ENCODE measurements at regions of chrX and their contacts with region 1.

Region 1: DNA sequence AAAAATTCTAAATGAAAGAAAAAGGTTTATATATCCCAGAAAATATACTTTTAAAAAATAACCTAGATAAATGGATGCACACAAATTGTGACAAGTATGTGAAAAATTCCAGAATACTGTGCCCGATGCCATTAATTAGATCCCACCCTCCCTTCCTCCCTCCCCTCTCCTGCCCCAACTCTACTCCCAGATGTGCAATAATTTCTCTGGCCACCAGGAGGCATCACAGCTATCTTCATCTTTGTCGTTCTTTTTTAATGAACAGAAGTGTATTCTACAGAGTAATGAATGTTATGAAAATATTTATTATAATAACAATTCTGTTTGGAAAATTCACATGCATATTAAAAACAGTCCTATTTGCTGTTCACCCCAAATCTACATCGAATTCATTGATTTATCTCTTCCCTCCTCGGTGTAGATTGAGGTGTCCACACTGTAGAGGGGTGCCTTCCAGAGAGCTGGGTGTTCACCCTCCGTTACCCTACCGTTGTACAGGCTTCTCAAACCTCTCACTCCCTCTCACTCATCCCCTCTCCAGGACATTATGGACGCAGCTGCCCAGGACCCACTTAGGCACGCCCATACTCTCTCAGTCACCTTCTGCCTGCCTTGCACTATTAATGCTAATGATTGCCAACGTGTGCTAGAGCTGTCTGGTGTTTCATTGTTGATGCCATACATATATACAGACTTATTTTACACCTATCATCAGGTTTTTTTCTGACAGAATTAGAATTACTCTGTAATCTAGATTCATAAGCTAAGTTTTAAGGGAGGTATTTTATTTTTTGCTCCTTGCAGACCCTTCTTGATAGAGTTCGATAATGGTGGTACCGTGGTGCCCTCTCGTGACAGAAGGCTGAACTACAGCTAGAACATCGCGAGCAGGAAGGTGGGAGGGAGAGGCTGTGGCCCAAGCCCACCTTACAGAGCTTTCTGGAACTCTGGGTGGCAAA is 14.1 kb downstream of the RAB40AL start:
- DNase-seq: peak; percentile 72
- ATAC-seq: peak; percentile 75
- H3K4me3 Mint-ChIP-seq: peak overlapping the region; percentile 43
- H3K27ac Mint-ChIP-seq: no peak overlapping the region
- H3K4me1 Mint-ChIP-seq: no peaks in the 10 kb centered on the region
- H3K27me3 Mint-ChIP-seq: no peaks in the 10 kb centered on the region
- CTCF ChIP-seq: peak; percentile 68

Region 2: DNA sequence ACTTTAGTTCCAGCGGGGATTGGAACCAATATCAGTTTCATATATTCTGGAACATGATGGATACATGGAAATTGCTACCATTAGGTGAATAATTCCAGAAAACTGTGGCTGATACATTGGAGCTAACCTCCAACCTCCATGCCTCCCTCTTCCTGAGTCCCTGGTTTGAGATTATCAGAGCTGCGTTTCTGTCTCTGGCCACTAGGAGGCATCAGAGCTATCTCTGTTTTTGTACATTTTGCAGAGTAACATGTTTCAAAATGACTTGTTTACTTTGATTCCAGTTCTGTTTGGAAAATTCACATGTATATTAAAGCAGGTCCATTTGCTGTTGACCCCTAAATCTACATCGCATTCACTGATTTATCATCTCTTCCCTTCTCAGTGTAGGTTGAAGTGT is 16.6 kb before region 1 on chrX:
- CTCF ChIA-PET with region 1: interaction called, 24 read pairs
- POLR2A ChIA-PET with region 1: no interaction called
- intact Hi-C with region 1: no loop called
- DNase-seq: peak; percentile 41
- ATAC-seq: no peak
- H3K4me3 Mint-ChIP-seq: no peak overlapping the region
- H3K27ac Mint-ChIP-seq: no peak overlapping the region
- H3K4me1 Mint-ChIP-seq: no peaks in the 10 kb centered on the region
- H3K27me3 Mint-ChIP-seq: no peaks in the 10 kb centered on the region
- CTCF ChIP-seq: peak; percentile 71

Region 3: GRCh38 chrX:102964940-102965339 is 13.8 kb after region 1 on chrX:
- CTCF ChIA-PET with region 1: interaction called, 10 read pairs
- POLR2A ChIA-PET with region 1: no interaction called
- intact Hi-C with region 1: no loop called
- DNase-seq: no peak
- ATAC-seq: no peak
- H3K4me3 Mint-ChIP-seq: no peak overlapping the region
- H3K27ac Mint-ChIP-seq: no peak overlapping the region
- H3K4me1 Mint-ChIP-seq: no peaks in the 10 kb centered on the region
- H3K27me3 Mint-ChIP-seq: no peaks in the 10 kb centered on the region
- CTCF ChIP-seq: no peak

Region 4: GRCh38 chrX:103157496-103158320 is 206.5 kb after region 1 on chrX:
- CTCF ChIA-PET with region 1: interaction called, 5 read pairs
- POLR2A ChIA-PET with region 1: no interaction called
- intact Hi-C with region 1: loop called (anchors 5 kb)
- DNase-seq: peak; percentile 19
- ATAC-seq: peak; percentile 60
- H3K4me3 Mint-ChIP-seq: no peak overlapping the region
- H3K27ac Mint-ChIP-seq: no peak overlapping the region
- H3K4me1 Mint-ChIP-seq: no peaks in the 10 kb centered on the region
- H3K27me3 Mint-ChIP-seq: no peaks in the 10 kb centered on the region
- CTCF ChIP-seq: peak; percentile 51

Region 5: DNA sequence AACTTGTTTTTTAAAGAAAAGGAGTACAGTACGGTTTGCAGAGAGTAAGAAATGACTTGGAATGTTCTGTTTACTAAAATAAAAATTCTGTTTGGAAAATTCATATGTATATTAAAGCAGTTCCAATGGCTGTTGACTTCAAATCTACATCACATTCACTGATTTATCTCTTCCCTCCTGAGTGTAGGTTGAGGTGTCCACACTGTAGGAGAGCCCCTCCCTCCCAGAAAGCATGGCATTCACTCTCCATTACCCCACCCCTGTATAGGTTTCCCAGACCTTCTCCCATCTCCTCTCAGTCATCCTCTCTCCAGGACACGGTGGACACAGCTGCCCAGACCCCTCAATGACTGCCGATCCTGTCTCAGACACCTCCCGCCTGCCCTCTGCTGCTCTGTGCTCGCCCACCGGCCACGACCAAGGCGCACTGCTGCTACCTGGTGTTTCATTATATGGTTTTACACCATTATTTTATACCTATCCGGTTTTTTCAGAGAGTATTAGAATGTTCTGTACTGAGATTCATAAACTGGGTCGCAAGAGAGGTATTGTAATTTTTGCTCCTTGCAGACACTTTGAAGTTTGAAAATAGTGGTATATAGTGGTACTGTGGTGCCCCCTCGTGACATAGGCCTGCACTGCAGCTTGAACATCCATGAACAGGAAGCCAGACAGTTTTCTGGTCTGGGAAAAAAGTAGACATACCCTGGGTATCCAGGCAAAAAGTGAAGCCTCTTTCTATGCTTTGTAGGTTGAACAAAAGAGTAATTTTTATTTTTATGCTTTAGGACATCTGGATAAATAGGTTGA is 225.0 kb after region 1 on chrX:
- CTCF ChIA-PET with region 1: interaction called, 26 read pairs
- POLR2A ChIA-PET with region 1: no interaction called
- intact Hi-C with region 1: loop called (anchors 5 kb)
- DNase-seq: peak; percentile 77
- ATAC-seq: peak; percentile 77
- H3K4me3 Mint-ChIP-seq: no peak overlapping the region
- H3K27ac Mint-ChIP-seq: no peak overlapping the region
- H3K4me1 Mint-ChIP-seq: peaks cover 3% of the 10 kb centered on the region
- H3K27me3 Mint-ChIP-seq: peaks cover 7% of the 10 kb centered on the region
- CTCF ChIP-seq: peak; percentile 54

Measured in activated CD8-positive, alpha-beta T cell treated with anti-CD3 and anti-CD28 coated beads for 36 hours (primary cell).